Astrocyte of the cerebellum (primary cell): ENCODE measurements at regions of chr17 and their contacts with region 1.

Region 1: DNA sequence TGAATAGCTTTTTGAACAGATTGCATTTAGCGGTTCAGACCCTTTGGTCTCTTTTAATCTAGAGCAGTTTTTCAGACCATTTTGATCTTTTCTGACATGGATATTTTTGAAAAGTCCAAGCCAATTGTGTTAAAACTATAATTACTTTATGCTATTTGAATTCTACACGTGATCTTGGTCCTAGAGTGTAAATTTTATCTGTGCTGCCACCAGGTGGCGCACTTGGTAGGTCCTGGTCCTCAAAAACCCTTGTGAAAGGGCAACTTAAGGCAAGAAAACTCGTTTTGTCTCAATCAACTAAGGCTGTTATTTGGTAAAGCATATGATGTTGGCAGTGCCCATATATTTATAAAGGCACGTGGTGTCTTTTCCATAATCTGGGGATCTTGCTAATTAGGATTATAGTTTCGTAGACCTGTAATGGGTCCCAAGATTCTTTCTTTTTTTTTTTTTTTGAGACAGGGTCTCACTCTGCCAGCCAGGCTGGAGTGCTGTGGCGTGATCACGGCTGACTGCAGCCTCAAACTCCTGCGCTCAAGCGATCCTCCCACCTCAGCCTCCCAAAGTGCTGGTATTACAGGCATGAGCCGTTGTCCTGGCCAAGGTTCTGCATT is 43.9 kb upstream of the TEX2 start:
- DNase-seq: peak; percentile 60
- H3K4me3 ChIP-seq: no peak overlapping the region
- CTCF ChIP-seq: peak; percentile 79

Region 2: GRCh38 chr17:64056269-64057005 is 250.5 kb before region 1 on chr17:
- in situ Hi-C with region 1: no loop called
- DNase-seq: no peak
- H3K4me3 ChIP-seq: no peak overlapping the region
- CTCF ChIP-seq: no peak

Region 3: DNA sequence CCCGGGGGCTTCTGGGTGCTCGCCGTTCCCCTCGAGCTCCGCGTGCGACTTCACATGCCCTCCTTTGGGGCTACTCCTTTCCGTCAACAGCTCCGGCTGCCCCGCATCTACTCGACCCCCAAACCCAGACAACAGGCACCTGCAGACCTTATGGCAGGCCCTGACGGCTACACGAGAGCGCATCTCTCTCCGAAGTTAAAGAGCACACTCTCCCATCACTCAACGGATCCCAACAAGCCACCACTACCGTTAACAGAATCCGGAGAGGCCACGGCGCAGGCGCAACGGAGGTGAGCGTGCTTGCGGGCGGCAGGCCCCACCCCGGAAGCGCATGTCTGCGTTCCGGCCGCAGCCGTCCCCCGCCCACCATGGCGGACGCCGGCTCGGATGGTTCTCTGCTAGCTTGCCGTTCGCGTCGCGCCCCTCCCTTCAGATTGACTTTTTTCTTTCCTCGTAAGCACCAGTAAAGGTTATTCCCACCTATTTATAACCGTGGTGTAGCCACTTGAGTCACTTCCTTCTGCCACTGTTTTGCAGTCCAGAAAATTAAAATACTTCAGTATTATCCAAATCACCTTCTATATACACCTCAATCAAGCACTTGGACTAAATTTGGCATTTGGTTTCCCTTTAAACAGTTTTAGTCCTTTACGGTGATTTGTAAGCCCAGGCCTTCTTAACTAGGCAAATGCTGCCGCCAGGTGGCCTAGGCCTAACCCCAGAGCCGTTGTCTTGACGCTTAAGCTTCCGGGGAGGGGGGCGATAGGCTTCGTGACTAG is 190.0 kb after region 1 on chr17 and contains the start of gene POLG2:
- in situ Hi-C with region 1: loop called (anchors 10 kb)
- DNase-seq: peak; percentile 82
- H3K4me3 ChIP-seq: peak within 1 kb of the TSS; percentile 64
- CTCF ChIP-seq: peak; percentile 66